ENCODE measurements at regions of chr7 and their contacts with region 1.

Region 1: GRCh38 chr7:54839538-54840213 is 80.7 kb upstream of the SEC61G start:
- DNase-seq: peak; percentile 81
- H3K4me3 Mint-ChIP-seq: no peak overlapping the region
- H3K27ac Mint-ChIP-seq: no peak overlapping the region
- H3K4me1 Mint-ChIP-seq: peaks cover 29% of the 10 kb centered on the region
- H3K27me3 Mint-ChIP-seq: no peaks in the 10 kb centered on the region
- CTCF ChIP-seq: peak; percentile 80

Region 2: GRCh38 chr7:54781134-54781912 is 58.4 kb before region 1 on chr7:
- CTCF ChIA-PET with region 1: interaction called, 90 read pairs
- POLR2A ChIA-PET with region 1: no interaction called
- intact Hi-C with region 1: no loop called
- DNase-seq: no peak
- H3K4me3 Mint-ChIP-seq: no peak overlapping the region
- H3K27ac Mint-ChIP-seq: no peak overlapping the region
- H3K4me1 Mint-ChIP-seq: no peaks in the 10 kb centered on the region
- H3K27me3 Mint-ChIP-seq: no peaks in the 10 kb centered on the region
- CTCF ChIP-seq: no peak

Region 3: DNA sequence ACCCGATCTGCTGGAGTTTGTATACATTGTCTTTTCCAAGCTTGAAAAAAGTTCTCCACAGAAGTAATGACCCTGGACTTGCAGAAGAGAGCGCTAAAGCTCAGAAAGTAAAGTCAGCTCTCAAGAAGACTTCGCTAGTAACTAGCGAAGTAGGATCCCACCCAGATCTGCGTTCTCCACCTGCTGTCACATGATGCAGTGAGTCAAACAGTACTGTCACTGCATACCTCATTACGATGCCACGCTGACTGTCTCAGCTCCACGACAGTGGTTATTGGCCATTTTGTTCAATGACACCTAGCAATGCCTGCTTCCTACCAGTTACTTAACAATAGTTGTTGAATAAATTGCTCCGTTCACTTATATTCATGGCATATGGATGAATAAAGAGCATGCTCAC is 51.0 kb before region 1 on chr7:
- CTCF ChIA-PET with region 1: interaction called, 9 read pairs
- POLR2A ChIA-PET with region 1: interaction called, 5 read pairs
- intact Hi-C with region 1: loop called (anchors 1 kb)
- DNase-seq: peak; percentile 65
- H3K4me3 Mint-ChIP-seq: no peak overlapping the region
- H3K27ac Mint-ChIP-seq: peak overlapping the region; percentile 49
- H3K4me1 Mint-ChIP-seq: peaks cover 6% of the 10 kb centered on the region
- H3K27me3 Mint-ChIP-seq: no peaks in the 10 kb centered on the region
- CTCF ChIP-seq: peak; percentile 54

Region 4: GRCh38 chr7:54811041-54811845 is 28.4 kb before region 1 on chr7:
- CTCF ChIA-PET with region 1: interaction called, 4 read pairs
- POLR2A ChIA-PET with region 1: interaction called, 10 read pairs
- intact Hi-C with region 1: no loop called
- DNase-seq: peak; percentile 31
- H3K4me3 Mint-ChIP-seq: no peak overlapping the region
- H3K27ac Mint-ChIP-seq: peak overlapping the region; percentile 73
- H3K4me1 Mint-ChIP-seq: peaks cover 37% of the 10 kb centered on the region
- H3K27me3 Mint-ChIP-seq: no peaks in the 10 kb centered on the region
- CTCF ChIP-seq: no peak